GM12878 (cell line): ENCODE measurements at regions of chr11 and their contacts with region 1.

Region 1: DNA sequence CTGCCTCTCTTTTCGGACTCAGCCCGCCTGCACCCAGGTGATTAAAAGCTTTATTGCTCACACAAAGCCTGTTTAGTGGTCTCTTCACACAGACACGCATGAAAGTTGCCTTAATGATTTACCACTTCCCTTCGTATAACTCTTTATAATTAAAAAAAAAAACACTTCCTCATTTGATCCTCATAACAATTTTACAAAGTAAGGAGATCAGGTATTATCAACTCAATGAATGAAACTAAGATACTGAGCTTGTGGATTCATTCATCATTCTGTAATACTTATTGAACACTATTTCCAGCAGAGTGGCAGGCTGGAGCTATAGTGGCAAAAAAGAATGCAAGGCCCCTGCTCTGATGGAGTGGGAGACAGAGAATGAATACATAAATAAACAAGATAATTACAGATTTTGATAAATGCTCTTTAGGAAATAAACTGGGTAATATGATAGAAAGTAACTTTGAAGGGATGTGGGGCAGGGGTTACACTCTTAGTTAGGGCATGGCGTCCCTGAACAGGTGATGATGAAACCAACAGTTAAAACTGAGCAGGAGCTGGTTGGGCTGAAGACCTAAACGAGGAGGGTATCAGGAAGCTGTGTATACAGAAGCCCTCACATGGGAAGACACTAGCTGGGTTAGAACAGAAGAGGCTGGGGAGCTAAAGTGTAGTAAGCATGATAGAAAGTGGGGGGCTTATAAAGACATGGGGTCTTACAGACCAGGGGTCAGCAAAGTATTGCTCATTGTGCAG is 5.4 kb upstream of the CRTAM start:
- DNase-seq: no peak
- ATAC-seq: peak; percentile 50
- H3K4me3 ChIP-seq: no peak overlapping the region
- H3K27ac ChIP-seq: no peak overlapping the region
- H3K4me1 ChIP-seq: no peaks in the 10 kb centered on the region
- H3K27me3 ChIP-seq: no peaks in the 10 kb centered on the region
- CTCF ChIP-seq: no peak
- EP300 ChIP-seq: no peak
- POLR2A ChIP-seq: no peak
- RAD21 ChIP-seq: no peak

Region 2: GRCh38 chr11:122717264-122717867 is 115.5 kb before region 1 on chr11:
- CTCF ChIA-PET with region 1: no interaction called
- POLR2A ChIA-PET with region 1: no interaction called
- RAD21 ChIA-PET with region 1: no interaction called
- SMC1A ChIA-PET with region 1: no interaction called
- in situ Hi-C with region 1: no loop called
- intact Hi-C with region 1: no loop called
- DNase-seq: peak; percentile 73
- ATAC-seq: peak; percentile 82
- H3K4me3 ChIP-seq: no peak overlapping the region
- H3K27ac ChIP-seq: peak overlapping the region; percentile 24; the same call in 1 of the 2 replicates
- H3K4me1 ChIP-seq: peaks cover 26% of the 10 kb centered on the region
- H3K27me3 ChIP-seq: peaks cover 0 to 1% of the 10 kb centered on the region in 2 experiments; a peak in 2 of 4 replicates
- CTCF ChIP-seq: no peak
- EP300 ChIP-seq: peak in 1 of 2 experiments; percentile 26; a peak in 2 of 4 replicates
- POLR2A ChIP-seq: no peak; the same call in 1 of the 2 replicates
- RAD21 ChIP-seq: no peak

Region 3: GRCh38 chr11:122808478-122808869 is 24.4 kb before region 1 on chr11:
- CTCF ChIA-PET with region 1: interaction called, 68 read pairs
- POLR2A ChIA-PET with region 1: interaction called, 7 read pairs
- RAD21 ChIA-PET with region 1: interaction called, 17 read pairs
- SMC1A ChIA-PET with region 1: interaction called, 46 read pairs
- in situ Hi-C with region 1: no loop called
- intact Hi-C with region 1: no loop called
- DNase-seq: peak; percentile 66
- ATAC-seq: peak; percentile 81
- H3K4me3 ChIP-seq: no peak overlapping the region
- H3K27ac ChIP-seq: peak overlapping the region; percentile 47; the same call in 1 of the 2 replicates
- H3K4me1 ChIP-seq: peaks cover 18% of the 10 kb centered on the region
- H3K27me3 ChIP-seq: no peaks in the 10 kb centered on the region
- CTCF ChIP-seq: no peak
- EP300 ChIP-seq: no peak
- POLR2A ChIP-seq: no peak
- RAD21 ChIP-seq: no peak

Region 4: GRCh38 chr11:122814401-122814800 is 18.5 kb before region 1 on chr11:
- CTCF ChIA-PET with region 1: interaction called, 68 read pairs
- POLR2A ChIA-PET with region 1: interaction called, 7 read pairs
- RAD21 ChIA-PET with region 1: interaction called, 17 read pairs
- SMC1A ChIA-PET with region 1: interaction called, 46 read pairs
- in situ Hi-C with region 1: no loop called
- intact Hi-C with region 1: no loop called
- DNase-seq: no peak
- ATAC-seq: peak; percentile 93
- H3K4me3 ChIP-seq: no peak overlapping the region
- H3K27ac ChIP-seq: no peak overlapping the region
- H3K4me1 ChIP-seq: no peaks in the 10 kb centered on the region; the same call in 1 of the 2 replicates
- H3K27me3 ChIP-seq: no peaks in the 10 kb centered on the region
- CTCF ChIP-seq: peak; percentile 22 to 51 (median 28); a peak in 3 of 6 replicates
- EP300 ChIP-seq: no peak
- POLR2A ChIP-seq: no peak
- RAD21 ChIP-seq: peak; percentile 60

Region 5: GRCh38 chr11:122822241-122822640 is 10.7 kb before region 1 on chr11:
- CTCF ChIA-PET with region 1: interaction called, 38 read pairs
- POLR2A ChIA-PET with region 1: interaction called, 7 read pairs
- RAD21 ChIA-PET with region 1: interaction called, 13 read pairs
- SMC1A ChIA-PET with region 1: interaction called, 46 read pairs
- in situ Hi-C with region 1: no loop called
- intact Hi-C with region 1: no loop called
- DNase-seq: no peak
- ATAC-seq: no peak
- H3K4me3 ChIP-seq: no peak overlapping the region
- H3K27ac ChIP-seq: no peak overlapping the region
- H3K4me1 ChIP-seq: no peaks in the 10 kb centered on the region
- H3K27me3 ChIP-seq: no peaks in the 10 kb centered on the region
- CTCF ChIP-seq: no peak
- EP300 ChIP-seq: no peak
- POLR2A ChIP-seq: no peak
- RAD21 ChIP-seq: no peak

Region 6: DNA sequence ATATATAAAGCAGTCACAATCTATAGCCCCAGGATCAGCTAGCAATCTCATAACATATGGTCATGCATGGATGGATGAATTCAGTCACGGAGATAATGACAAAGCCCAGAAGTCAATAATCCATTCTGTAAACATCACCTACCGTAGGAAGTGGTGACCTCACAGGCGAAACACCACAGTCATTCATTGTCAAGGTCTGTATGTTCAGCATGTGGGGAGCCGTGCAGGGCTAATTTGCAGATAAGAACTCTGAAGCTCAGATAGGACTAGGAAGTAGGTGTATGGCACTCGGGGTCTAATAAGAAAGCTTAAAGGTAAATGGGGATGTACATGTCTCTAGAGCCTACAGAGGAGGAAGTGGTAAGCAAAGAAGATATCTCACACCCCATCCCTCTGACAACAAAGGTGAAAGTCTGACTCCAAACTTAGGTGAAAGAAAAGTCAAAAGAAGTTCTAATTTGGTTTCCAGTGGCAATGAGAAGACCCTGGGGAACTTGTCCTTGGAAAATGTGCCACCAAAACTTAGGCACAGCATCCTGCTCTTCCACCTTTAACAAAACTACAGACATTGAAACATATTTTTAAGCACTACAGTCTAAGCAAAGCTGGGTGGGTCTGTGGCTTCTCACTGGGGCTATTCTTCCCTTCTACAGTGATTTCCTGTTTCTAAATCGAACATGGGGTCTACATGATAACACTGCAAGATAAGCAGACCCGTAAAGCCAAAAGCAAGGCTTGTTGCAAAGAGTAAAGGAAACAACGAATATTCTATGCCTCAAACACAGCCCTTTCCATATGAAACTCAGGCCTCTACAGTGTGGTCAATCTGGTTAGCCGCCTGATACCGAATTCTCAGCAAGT is 10.6 kb after region 1 on chr11:
- CTCF ChIA-PET with region 1: interaction called, 23 read pairs
- POLR2A ChIA-PET with region 1: interaction called, 6 read pairs
- RAD21 ChIA-PET with region 1: interaction called, 16 read pairs
- SMC1A ChIA-PET with region 1: interaction called, 138 read pairs
- in situ Hi-C with region 1: no loop called
- intact Hi-C with region 1: no loop called
- DNase-seq: no peak
- ATAC-seq: peak; percentile 87
- H3K4me3 ChIP-seq: no peak overlapping the region
- H3K27ac ChIP-seq: peak overlapping the region; percentile 42; the same call in 1 of the 2 replicates
- H3K4me1 ChIP-seq: peaks cover 11% of the 10 kb centered on the region; the same call in 1 of the 2 replicates
- H3K27me3 ChIP-seq: no peaks in the 10 kb centered on the region
- CTCF ChIP-seq: no peak
- EP300 ChIP-seq: no peak
- POLR2A ChIP-seq: no peak
- RAD21 ChIP-seq: no peak